Adrenal gland (tissue), 19 donors: ENCODE measurements at regions of chr14 and their contacts with region 1.

Region 1: GRCh38 chr14:31937721-31938346 is 139.3 kb upstream of the ARHGAP5 start:
- DNase-seq: peak; percentile 54 to 90 (median 88)
- H3K4me3 ChIP-seq: no peak overlapping the region
- H3K27ac ChIP-seq: peak overlapping the region in 1 of 5 donors; percentile 14
- H3K4me1 ChIP-seq: peaks cover 8 to 18% of the 10 kb centered on the region in 2 donors
- H3K27me3 ChIP-seq: no peaks in the 10 kb centered on the region
- CTCF ChIP-seq: no peak
- POLR2A ChIP-seq: no peak

Region 2: DNA sequence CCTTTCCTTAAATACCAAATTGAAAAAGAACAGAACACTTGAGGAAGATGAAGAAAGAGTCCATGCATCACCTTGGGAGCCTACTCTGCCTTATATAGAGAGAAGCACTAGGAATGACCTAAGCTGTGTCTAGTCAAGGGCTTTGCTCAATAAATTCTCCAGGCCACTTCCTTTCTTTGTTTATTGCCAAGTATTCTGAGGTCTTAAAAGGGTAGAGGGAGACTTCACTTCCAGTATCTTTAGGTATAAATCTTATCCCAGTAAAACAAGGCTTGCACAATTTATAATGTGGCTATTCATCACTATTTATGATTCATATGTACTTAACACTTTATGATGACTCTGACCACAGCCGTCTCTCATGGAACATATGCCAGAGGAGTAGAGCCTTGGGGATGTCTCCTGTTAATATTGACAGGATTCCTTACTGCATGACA is 54.2 kb after region 1 on chr14:
- intact Hi-C with region 1: no loop called
- DNase-seq: no peak
- H3K4me3 ChIP-seq: no peak overlapping the region
- H3K27ac ChIP-seq: peak overlapping the region in 2 of 5 donors; percentile 58 to 77
- H3K4me1 ChIP-seq: peaks cover 0 to 24% of the 10 kb centered on the region in 2 donors
- H3K27me3 ChIP-seq: no peaks in the 10 kb centered on the region
- CTCF ChIP-seq: no peak
- POLR2A ChIP-seq: no peak

Region 3: GRCh38 chr14:32244404-32244803 is 306.6 kb after region 1 on chr14:
- intact Hi-C with region 1: loop called in 1 of 2 experiments (anchors 10 kb)
- DNase-seq: no peak
- H3K4me3 ChIP-seq: no peak overlapping the region
- H3K27ac ChIP-seq: no peak overlapping the region
- H3K4me1 ChIP-seq: no peaks in the 10 kb centered on the region
- H3K27me3 ChIP-seq: no peaks in the 10 kb centered on the region
- CTCF ChIP-seq: peak in 1 of 6 experiments; percentile 8
- POLR2A ChIP-seq: no peak